Activated CD4-positive, alpha-beta memory T cell treated with anti-CD3 and anti-CD28 coated beads, Interleukin-2, amount 10 ng/mL, durations not matched to agents 7 days and 5 days (primary cell): ENCODE measurements at regions of chr17 and their contacts with region 1.

Region 1: DNA sequence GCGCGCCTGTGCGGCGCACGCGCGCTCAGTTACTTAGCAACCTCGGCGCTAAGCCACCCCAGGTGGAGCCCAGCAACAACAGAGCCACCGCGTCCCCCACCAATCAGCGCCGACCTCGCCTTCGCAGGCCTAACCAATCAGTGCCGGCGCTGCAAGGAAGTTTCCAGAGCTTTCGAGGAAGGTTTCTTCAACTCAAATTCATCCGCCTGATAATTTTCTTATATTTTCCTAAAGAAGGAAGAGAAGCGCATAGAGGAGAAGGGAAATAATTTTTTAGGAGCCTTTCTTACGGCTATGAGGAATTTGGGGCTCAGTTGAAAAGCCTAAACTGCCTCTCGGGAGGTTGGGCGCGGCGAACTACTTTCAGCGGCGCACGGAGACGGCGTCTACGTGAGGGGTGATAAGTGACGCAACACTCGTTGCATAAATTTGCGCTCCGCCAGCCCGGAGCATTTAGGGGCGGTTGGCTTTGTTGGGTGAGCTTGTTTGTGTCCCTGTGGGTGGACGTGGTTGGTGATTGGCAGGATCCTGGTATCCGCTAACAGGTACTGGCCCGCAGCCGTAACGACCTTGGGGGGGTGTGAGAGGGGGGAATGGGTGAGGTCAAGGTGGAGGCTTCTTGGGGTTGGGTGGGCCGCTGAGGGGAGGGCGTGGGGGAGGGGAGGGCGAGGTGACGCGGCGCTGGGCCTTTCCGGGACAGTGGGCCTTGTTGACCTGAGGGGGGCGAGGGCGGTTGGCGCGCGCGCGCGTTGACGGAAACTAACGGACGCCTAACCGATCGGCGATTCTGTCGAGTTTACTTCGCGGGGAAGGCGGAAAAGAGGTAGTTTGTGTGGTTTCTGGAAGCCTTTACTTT is at the start of gene UBB:
- DNase-seq: peak; percentile 96
- H3K4me3 Mint-ChIP-seq: peak within 1 kb of the TSS; percentile 88
- H3K27ac Mint-ChIP-seq: peak within 1 kb of the TSS; percentile 87
- H3K4me1 Mint-ChIP-seq: peaks cover 34% of the 10 kb centered on the region
- H3K27me3 Mint-ChIP-seq: peaks cover 2% of the 10 kb centered on the region
- total RNA-seq, gene UBB: 1,185 TPM

Region 2: GRCh38 chr17:16150251-16150856 is 230.5 kb before region 1 on chr17:
- CTCF ChIA-PET with region 1: no interaction called
- POLR2A ChIA-PET with region 1: no interaction called
- DNase-seq: no peak
- H3K4me3 Mint-ChIP-seq: no peak overlapping the region
- H3K27ac Mint-ChIP-seq: no peak overlapping the region
- H3K4me1 Mint-ChIP-seq: no peaks in the 10 kb centered on the region
- H3K27me3 Mint-ChIP-seq: no peaks in the 10 kb centered on the region

Region 3: GRCh38 chr17:16329519-16330271 is 51.2 kb before region 1 on chr17:
- CTCF ChIA-PET with region 1: no interaction called
- POLR2A ChIA-PET with region 1: no interaction called
- DNase-seq: no peak
- H3K4me3 Mint-ChIP-seq: no peak overlapping the region
- H3K27ac Mint-ChIP-seq: no peak overlapping the region
- H3K4me1 Mint-ChIP-seq: no peaks in the 10 kb centered on the region
- H3K27me3 Mint-ChIP-seq: no peaks in the 10 kb centered on the region

Region 4: GRCh38 chr17:16353317-16354174 is 27.3 kb before region 1 on chr17 and contains the start of gene CENPV:
- CTCF ChIA-PET with region 1: interaction called, 4 read pairs
- POLR2A ChIA-PET with region 1: interaction called, 21 read pairs
- DNase-seq: peak; percentile 50
- H3K4me3 Mint-ChIP-seq: peak within 1 kb of the TSS; percentile 82
- H3K27ac Mint-ChIP-seq: no peak within 1 kb of the TSS
- H3K4me1 Mint-ChIP-seq: peaks cover 19% of the 10 kb centered on the region
- H3K27me3 Mint-ChIP-seq: peaks cover 28% of the 10 kb centered on the region
- total RNA-seq, gene CENPV: 9.4 to 12.3 TPM

Region 5: GRCh38 chr17:16453493-16453851 is 72.6 kb after region 1 on chr17:
- CTCF ChIA-PET with region 1: no interaction called
- POLR2A ChIA-PET with region 1: no interaction called
- DNase-seq: no peak
- H3K4me3 Mint-ChIP-seq: no peak overlapping the region
- H3K27ac Mint-ChIP-seq: no peak overlapping the region
- H3K4me1 Mint-ChIP-seq: peaks cover 5% of the 10 kb centered on the region
- H3K27me3 Mint-ChIP-seq: no peaks in the 10 kb centered on the region